Mucosa of descending colon (tissue), 3 donors: ENCODE measurements at regions of chr17 and their contacts with region 1.

Region 1: GRCh38 chr17:60993497-60993896 is 315.8 kb downstream of the BCAS3 start:
- DNase-seq: no peak
- ATAC-seq: no peak
- H3K4me3 ChIP-seq: no peak overlapping the region
- H3K4me1 ChIP-seq: no peaks in the 10 kb centered on the region
- CTCF ChIP-seq: no peak

Region 2: GRCh38 chr17:60604686-60605352 is 388.7 kb before region 1 on chr17:
- intact Hi-C with region 1: no loop called
- DNase-seq: no peak
- ATAC-seq: no peak
- H3K4me3 ChIP-seq: no peak overlapping the region
- H3K4me1 ChIP-seq: peaks cover 19% of the 10 kb centered on the region
- CTCF ChIP-seq: no peak

Region 3: DNA sequence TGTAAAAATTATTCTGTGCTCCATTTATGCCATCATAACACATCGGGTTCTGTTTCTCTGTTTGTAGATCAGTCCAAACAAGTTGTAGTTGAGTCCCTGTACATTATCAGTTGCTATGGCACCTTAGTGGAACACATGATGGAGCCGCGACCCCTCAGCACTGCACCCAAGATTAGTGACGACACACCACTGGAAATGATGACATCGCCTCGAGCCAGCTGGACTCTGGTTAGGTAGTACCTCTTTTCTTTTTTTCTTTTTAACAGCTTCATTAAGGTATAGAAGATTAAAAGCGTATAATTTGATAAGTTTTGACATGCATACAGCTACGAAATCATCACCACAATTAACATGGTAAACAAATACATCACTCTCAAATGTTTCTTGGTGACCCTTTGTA is 44.3 kb after region 1 on chr17:
- intact Hi-C with region 1: no loop called
- DNase-seq: no peak
- ATAC-seq: no peak
- H3K4me3 ChIP-seq: no peak overlapping the region
- H3K4me1 ChIP-seq: no peaks in the 10 kb centered on the region
- CTCF ChIP-seq: no peak

Region 4: GRCh38 chr17:61389670-61390478 is 396.4 kb after region 1 on chr17:
- intact Hi-C with region 1: loop called in 1 of 2 experiments (anchors 10 kb)
- DNase-seq: peak in 2 of 3 donors; percentile 25 to 55
- ATAC-seq: peak; percentile 58
- H3K4me3 ChIP-seq: no peak overlapping the region
- H3K4me1 ChIP-seq: no peaks in the 10 kb centered on the region
- CTCF ChIP-seq: peak; percentile 54